IMR-90 (cell line): ENCODE measurements at regions of chr2 and their contacts with region 1.

Region 1: DNA sequence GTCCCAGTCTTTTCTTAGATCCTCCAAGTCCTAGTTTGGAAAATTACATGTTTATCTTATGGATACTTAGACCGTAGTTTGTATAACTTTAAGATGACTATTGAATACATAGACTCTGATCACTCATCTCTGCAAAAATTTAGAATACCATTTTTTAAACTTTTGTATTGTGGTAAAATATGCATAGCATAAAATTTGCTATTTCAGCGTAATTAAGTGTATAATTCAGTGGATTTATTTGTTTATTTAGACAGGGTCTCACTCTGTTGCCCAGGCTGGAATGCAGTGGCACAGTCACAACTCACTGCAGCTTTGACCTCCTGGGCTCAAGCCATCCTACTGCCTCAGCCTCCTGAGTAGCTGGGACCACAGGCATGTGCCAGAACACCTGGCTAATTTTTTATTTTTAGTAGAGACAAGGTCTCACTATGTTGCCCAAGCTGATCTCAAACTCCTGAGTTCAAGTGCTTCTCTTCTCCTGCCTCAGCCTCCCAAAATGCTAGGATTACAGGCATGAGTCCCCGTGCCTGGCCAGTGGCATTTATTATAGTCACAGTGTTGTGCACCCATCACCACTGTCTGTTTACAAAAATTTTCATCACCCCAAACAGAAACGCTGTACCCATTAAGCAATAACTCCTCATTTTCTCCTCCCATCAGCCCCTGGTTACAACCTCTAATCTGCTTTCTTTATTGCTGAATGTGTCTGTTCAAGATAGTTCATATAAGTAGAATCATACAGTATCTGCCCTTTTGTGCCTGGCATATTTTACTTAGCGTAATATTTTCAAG is 90.0 kb downstream of the MAP3K20 start:
- DNase-seq: peak; percentile 34
- ATAC-seq: peak; percentile 72
- H3K4me3 ChIP-seq: no peak overlapping the region
- H3K27ac ChIP-seq: no peak overlapping the region
- H3K4me1 ChIP-seq: peaks cover 9% of the 10 kb centered on the region
- H3K27me3 ChIP-seq: no peaks in the 10 kb centered on the region
- CTCF ChIP-seq: no peak
- POLR2A ChIP-seq: no peak
- RAD21 ChIP-seq: no peak

Region 2: GRCh38 chr2:172465417-172466334 is 700.0 kb before region 1 on chr2:
- CTCF ChIA-PET with region 1: no interaction called
- POLR2A ChIA-PET with region 1: no interaction called
- dilution Hi-C with region 1: no loop called
- in situ Hi-C with region 1: no loop called
- intact Hi-C with region 1: no loop called
- DNase-seq: peak; percentile 89
- ATAC-seq: peak; percentile 91
- H3K4me3 ChIP-seq: peak overlapping the region; percentile 46
- H3K27ac ChIP-seq: peak overlapping the region; percentile 44
- H3K4me1 ChIP-seq: peaks cover 6% of the 10 kb centered on the region
- H3K27me3 ChIP-seq: no peaks in the 10 kb centered on the region
- CTCF ChIP-seq: peak; percentile 95
- POLR2A ChIP-seq: 0 out of 2 replicates have a peak, but pooled peaks have one; percentile 39
- RAD21 ChIP-seq: peak; percentile 97

Region 3: GRCh38 chr2:173204316-173204715 is 38.7 kb after region 1 on chr2:
- CTCF ChIA-PET with region 1: no interaction called
- POLR2A ChIA-PET with region 1: no interaction called
- dilution Hi-C with region 1: no loop called
- in situ Hi-C with region 1: no loop called
- intact Hi-C with region 1: loop called (anchors 5 kb)
- DNase-seq: no peak
- ATAC-seq: no peak
- H3K4me3 ChIP-seq: no peak overlapping the region
- H3K27ac ChIP-seq: no peak overlapping the region
- H3K4me1 ChIP-seq: no peaks in the 10 kb centered on the region
- H3K27me3 ChIP-seq: no peaks in the 10 kb centered on the region
- CTCF ChIP-seq: no peak
- POLR2A ChIP-seq: no peak
- RAD21 ChIP-seq: no peak